Caco-2 (cell line): ENCODE measurements at regions of chr1 and their contacts with region 1.

Region 1: GRCh38 chr1:173824331-173825081 is at the starts of genes CENPL and DARS2:
- DNase-seq: peak; percentile 93 to 95
- H3K4me3 ChIP-seq: peak within 1 kb of the TSS; percentile 89
- H3K4me3 Mint-ChIP-seq: peak within 1 kb of the TSS; percentile 100
- H3K27ac Mint-ChIP-seq: peak within 1 kb of the TSS; percentile 100
- H3K4me1 ChIP-seq: peaks cover 4% of the 10 kb centered on the region; the same call in 1 of the 2 replicates
- H3K4me1 Mint-ChIP-seq: peaks cover 23% of the 10 kb centered on the region
- H3K27me3 ChIP-seq: no peaks in the 10 kb centered on the region
- H3K27me3 Mint-ChIP-seq: no peaks in the 10 kb centered on the region
- CTCF ChIP-seq: no peak
- total RNA-seq, gene CENPL: 21.3 and 23.1 TPM in 2 replicates
- total RNA-seq, gene DARS2: 41.3 and 45.1 TPM in 2 replicates

Region 2: DNA sequence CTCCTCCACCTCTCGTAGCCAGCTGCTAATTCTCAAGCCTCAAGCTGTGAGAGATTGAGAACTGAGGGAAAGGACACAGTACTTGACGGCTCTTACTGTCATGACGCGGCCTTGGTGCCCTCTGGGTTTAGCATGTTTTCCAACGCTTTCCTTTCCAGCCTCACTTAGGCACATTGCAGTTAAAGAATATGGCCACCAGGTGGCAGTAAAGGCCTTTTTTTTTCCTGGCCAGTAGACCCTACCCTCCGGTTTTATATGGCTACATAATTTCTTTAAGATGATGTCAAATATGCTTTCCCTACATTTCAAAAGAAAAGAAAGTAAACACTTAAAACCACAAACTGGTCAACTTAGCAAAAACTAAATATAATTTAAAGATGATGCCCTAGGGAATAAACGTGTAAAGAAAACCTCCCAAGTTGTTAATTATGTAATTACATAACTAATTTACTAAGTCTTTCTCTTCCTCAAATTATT is 404.1 kb before region 1 on chr1:
- CTCF ChIA-PET with region 1: no interaction called
- POLR2A ChIA-PET with region 1: no interaction called
- intact Hi-C with region 1: loop called (anchors 1 kb)
- DNase-seq: peak; percentile 61 to 73
- H3K4me3 ChIP-seq: no peak overlapping the region
- H3K4me3 Mint-ChIP-seq: no peak overlapping the region
- H3K27ac Mint-ChIP-seq: no peak overlapping the region
- H3K4me1 ChIP-seq: peaks cover 21% of the 10 kb centered on the region
- H3K4me1 Mint-ChIP-seq: peaks cover 22% of the 10 kb centered on the region
- H3K27me3 ChIP-seq: no peaks in the 10 kb centered on the region
- H3K27me3 Mint-ChIP-seq: no peaks in the 10 kb centered on the region
- CTCF ChIP-seq: peak; percentile 69 to 85

Region 3: DNA sequence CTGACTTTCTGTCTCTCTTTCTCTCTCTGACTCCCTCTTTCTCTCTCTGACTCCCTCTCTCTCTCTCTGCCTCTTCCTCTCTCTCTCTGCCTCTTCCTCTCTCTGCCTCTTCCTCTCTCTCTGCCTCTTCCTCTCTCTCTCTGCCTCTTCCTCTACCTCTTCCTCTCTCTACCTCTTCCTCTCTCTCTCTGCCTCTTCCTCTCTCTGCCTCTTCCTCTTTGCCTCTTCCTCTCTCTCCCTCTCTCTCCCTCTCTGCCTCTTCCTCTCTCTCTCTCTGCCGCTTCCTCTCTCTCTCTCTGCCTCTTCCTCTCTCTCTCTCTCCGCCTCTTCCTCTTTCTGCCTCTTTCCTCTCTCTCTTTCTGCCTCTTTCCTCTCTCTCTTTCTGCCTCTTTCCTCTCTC is 136.2 kb before region 1 on chr1:
- CTCF ChIA-PET with region 1: no interaction called
- POLR2A ChIA-PET with region 1: no interaction called
- intact Hi-C with region 1: loop called (anchors 2 kb)
- DNase-seq: no peak
- H3K4me3 ChIP-seq: no peak overlapping the region
- H3K4me3 Mint-ChIP-seq: no peak overlapping the region
- H3K27ac Mint-ChIP-seq: no peak overlapping the region
- H3K4me1 ChIP-seq: no peaks in the 10 kb centered on the region
- H3K4me1 Mint-ChIP-seq: peaks cover 14% of the 10 kb centered on the region
- H3K27me3 ChIP-seq: no peaks in the 10 kb centered on the region
- H3K27me3 Mint-ChIP-seq: peaks cover 11% of the 10 kb centered on the region
- CTCF ChIP-seq: no peak

Region 4: GRCh38 chr1:173798078-173798477 is 26.4 kb before region 1 on chr1:
- CTCF ChIA-PET with region 1: no interaction called
- POLR2A ChIA-PET with region 1: interaction called, 14 read pairs
- intact Hi-C with region 1: no loop called
- DNase-seq: no peak
- H3K4me3 ChIP-seq: no peak overlapping the region
- H3K4me3 Mint-ChIP-seq: no peak overlapping the region
- H3K27ac Mint-ChIP-seq: no peak overlapping the region
- H3K4me1 ChIP-seq: no peaks in the 10 kb centered on the region
- H3K4me1 Mint-ChIP-seq: no peaks in the 10 kb centered on the region
- H3K27me3 ChIP-seq: no peaks in the 10 kb centered on the region
- H3K27me3 Mint-ChIP-seq: no peaks in the 10 kb centered on the region
- CTCF ChIP-seq: no peak